ENCODE measurements at regions of chr10 and their contacts with region 1.

Region 1: GRCh38 chr10:48598243-48598935 is 6.5 kb downstream of the ARHGAP22 start:
- DNase-seq: no peak
- ATAC-seq: 0 out of 6 replicates have a peak, but pooled peaks of 1 of the 2 experiments have one; percentile 28
- H3K4me3 ChIP-seq: no peak overlapping the region
- H3K27ac ChIP-seq: no peak overlapping the region
- H3K4me1 ChIP-seq: no peaks in the 10 kb centered on the region
- CTCF ChIP-seq: no peak
- EP300 ChIP-seq: no peak
- POLR2A ChIP-seq: no peak
- RAD21 ChIP-seq: no peak

Region 2: DNA sequence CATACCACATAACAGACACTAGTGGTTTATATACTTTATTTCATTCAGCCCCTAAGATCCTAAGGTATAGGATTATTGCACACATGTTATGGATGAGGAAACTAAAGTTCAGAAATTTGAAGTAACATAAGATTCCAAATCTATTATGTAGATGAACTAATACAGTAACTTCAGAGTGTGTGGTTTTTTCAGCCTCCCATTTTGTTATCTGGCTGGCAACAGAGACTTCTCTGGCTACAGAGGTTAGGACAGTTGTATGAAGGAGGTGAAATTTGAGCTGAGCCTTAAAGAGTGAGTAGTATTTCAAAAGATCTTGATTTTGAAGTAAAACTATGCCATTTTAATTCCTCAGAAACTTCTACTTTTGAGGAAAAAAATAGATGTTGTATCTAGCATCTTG is 166.5 kb before region 1 on chr10:
- CTCF ChIA-PET with region 1: no interaction called
- POLR2A ChIA-PET with region 1: no interaction called
- DNase-seq: no peak
- ATAC-seq: no peak
- H3K4me3 ChIP-seq: no peak overlapping the region
- H3K27ac ChIP-seq: no peak overlapping the region
- H3K4me1 ChIP-seq: no peaks in the 10 kb centered on the region
- CTCF ChIP-seq: no peak
- EP300 ChIP-seq: no peak
- POLR2A ChIP-seq: no peak
- RAD21 ChIP-seq: no peak

Region 3: GRCh38 chr10:48574322-48574796 is 24.0 kb before region 1 on chr10:
- CTCF ChIA-PET with region 1: no interaction called
- POLR2A ChIA-PET with region 1: no interaction called
- DNase-seq: no peak
- ATAC-seq: no peak
- H3K4me3 ChIP-seq: no peak overlapping the region
- H3K27ac ChIP-seq: no peak overlapping the region
- H3K4me1 ChIP-seq: no peaks in the 10 kb centered on the region
- CTCF ChIP-seq: no peak
- EP300 ChIP-seq: no peak
- POLR2A ChIP-seq: no peak
- RAD21 ChIP-seq: no peak

Region 4: DNA sequence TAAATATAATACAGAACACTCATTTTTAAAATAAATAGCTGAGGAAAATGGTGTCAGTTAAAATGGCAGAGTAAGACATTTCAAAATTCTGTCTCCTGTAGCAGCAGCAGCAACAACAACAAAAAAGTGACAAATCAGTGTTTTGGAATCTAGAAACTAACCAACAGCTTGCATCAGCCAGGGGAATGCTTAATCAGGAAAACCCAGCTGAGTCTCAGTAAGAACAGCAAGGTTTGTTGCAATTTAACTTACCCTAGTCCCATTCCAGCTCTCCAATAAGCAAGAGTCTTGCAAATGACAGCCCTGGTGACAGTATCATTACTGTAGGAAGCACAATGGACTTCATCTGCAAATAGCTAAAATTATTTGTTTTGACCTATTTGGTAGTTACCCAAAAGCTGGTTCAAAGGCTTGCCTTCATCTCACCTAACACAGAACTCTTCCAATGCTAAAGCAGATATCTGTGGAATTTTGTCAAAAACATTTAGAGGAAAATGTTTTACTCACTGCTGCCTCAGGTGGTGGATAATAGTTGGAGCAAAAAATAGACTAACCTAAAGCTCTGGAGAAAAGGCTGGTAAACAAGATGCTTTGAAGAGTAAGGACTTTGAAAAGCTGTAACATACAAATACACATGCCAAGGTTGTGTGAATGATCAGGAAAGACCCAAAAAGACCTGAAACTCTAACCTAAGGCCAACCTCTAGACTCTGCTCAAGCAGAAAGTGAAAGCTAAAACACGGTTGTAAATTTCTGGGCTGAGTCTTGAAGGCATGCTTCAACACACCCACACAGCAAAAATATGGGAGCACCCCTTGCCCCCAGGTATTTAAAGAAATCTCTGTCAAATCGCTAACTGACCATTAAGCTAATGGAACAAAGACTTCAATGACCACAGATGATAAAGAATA is 16.3 kb after region 1 on chr10:
- CTCF ChIA-PET with region 1: interaction called, 10 read pairs
- POLR2A ChIA-PET with region 1: no interaction called
- DNase-seq: peak in 1 of 2 experiments; percentile 22
- ATAC-seq: peak; percentile 43 to 58; a peak in 4 of 6 replicates
- H3K4me3 ChIP-seq: no peak overlapping the region
- H3K27ac ChIP-seq: no peak overlapping the region
- H3K4me1 ChIP-seq: no peaks in the 10 kb centered on the region
- CTCF ChIP-seq: peak; percentile 16; the same call in 1 of the 3 replicates
- EP300 ChIP-seq: no peak
- POLR2A ChIP-seq: no peak
- RAD21 ChIP-seq: no peak

Measured in A549 (cell line).